PC-9 (cell line): ENCODE measurements at regions of chr7 and their contacts with region 1.

Region 1: GRCh38 chr7:45111298-45112223 is at the start of gene TBRG4:
- DNase-seq: peak; percentile 92 to 95
- H3K4me3 ChIP-seq: peak within 1 kb of the TSS; percentile 68
- H3K27ac ChIP-seq: peak within 1 kb of the TSS; percentile 82
- H3K4me1 ChIP-seq: peaks cover 25% of the 10 kb centered on the region
- H3K27me3 ChIP-seq: peaks cover 13% of the 10 kb centered on the region
- CTCF ChIP-seq: peak; percentile 67; the same call in 1 of the 2 replicates
- total RNA-seq, gene TBRG4: 117 and 120 TPM in 2 replicates

Region 2: DNA sequence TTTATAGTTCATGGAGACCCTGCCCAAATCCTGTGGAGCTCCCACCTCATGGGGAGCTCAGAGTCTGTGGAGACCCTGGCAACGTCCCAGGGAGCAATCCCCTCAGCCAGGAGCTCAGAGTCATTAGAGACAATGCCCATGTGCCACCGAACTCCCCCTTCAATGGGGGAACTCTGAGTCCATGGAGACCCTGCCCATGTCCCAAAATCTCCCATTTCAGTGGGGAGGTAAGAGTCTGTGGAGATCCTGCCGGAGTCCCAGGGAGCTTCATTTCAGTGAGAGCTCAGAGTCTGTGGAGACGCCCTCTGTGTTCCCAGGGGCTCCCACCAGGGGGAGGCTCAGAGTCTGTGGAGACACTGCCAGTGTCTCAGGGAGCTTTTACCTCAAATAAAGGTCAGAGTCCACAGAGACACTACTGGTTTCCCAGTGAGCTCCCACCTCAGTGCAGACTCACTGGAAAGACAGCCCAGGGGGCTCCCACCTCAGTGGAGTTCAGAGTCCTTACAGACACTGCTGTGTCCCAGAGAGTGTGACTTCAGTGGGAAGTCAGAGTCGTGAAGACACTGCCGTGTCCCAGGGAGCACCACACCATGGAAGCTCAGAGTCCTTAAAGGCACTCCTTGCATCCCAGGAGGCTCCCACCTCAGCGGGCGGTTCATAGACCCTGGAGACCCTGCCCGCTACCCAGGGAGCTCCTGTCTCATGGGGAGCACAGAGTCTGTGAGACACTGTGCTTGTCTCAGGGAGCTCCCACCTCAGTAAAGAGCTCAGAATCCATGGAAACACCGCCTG is 137.8 kb before region 1 on chr7:
- CTCF ChIA-PET with region 1: interaction called, 3 read pairs
- POLR2A ChIA-PET with region 1: interaction called, 22 read pairs
- intact Hi-C with region 1: no loop called
- DNase-seq: peak in 1 of 2 experiments; percentile 50
- H3K4me3 ChIP-seq: no peak overlapping the region
- H3K27ac ChIP-seq: no peak overlapping the region
- H3K4me1 ChIP-seq: no peaks in the 10 kb centered on the region
- H3K27me3 ChIP-seq: no peaks in the 10 kb centered on the region
- CTCF ChIP-seq: peak; percentile 66